A673 (cell line): ENCODE measurements at regions of chr10 and their contacts with region 1.

Region 1: GRCh38 chr10:118568327-118568848 is 27.1 kb downstream of the PRLHR start:
- DNase-seq: peak; percentile 76
- H3K4me3 ChIP-seq: no peak overlapping the region
- H3K27ac ChIP-seq: no peak overlapping the region
- H3K4me1 ChIP-seq: no peaks in the 10 kb centered on the region
- H3K27me3 ChIP-seq: no peaks in the 10 kb centered on the region
- CTCF ChIP-seq: peak; percentile 68

Region 2: DNA sequence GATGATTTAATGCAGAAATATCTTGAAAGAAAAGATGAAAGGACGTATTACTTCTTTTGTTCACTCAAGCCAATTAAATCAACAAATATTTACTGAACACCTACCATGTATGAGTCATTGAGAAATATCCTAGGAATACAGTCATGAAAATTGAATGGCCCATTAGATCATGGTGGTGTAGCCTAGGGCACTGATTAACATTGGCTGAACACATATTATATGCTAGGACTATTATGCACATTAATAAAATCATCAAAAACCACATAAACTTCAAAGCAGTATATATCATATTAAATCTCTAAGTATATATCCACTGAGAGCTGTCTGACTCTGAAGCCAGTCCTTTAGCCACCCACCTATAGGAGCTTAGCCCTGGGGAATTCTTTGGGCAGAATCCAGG is 268.1 kb before region 1 on chr10:
- CTCF ChIA-PET with region 1: no interaction called
- POLR2A ChIA-PET with region 1: no interaction called
- intact Hi-C with region 1: no loop called
- DNase-seq: no peak
- H3K4me3 ChIP-seq: no peak overlapping the region
- H3K27ac ChIP-seq: no peak overlapping the region
- H3K4me1 ChIP-seq: no peaks in the 10 kb centered on the region
- H3K27me3 ChIP-seq: no peaks in the 10 kb centered on the region
- CTCF ChIP-seq: no peak

Region 3: GRCh38 chr10:118720685-118721538 is 152.5 kb after region 1 on chr10:
- CTCF ChIA-PET with region 1: interaction called, 14 read pairs
- POLR2A ChIA-PET with region 1: no interaction called
- intact Hi-C with region 1: loop called (anchors 1 kb)
- DNase-seq: peak; percentile 64
- H3K4me3 ChIP-seq: no peak overlapping the region
- H3K27ac ChIP-seq: no peak overlapping the region
- H3K4me1 ChIP-seq: no peaks in the 10 kb centered on the region
- H3K27me3 ChIP-seq: no peaks in the 10 kb centered on the region
- CTCF ChIP-seq: peak; percentile 90

Region 4: GRCh38 chr10:118850418-118851061 is 282.2 kb after region 1 on chr10:
- CTCF ChIA-PET with region 1: interaction called, 3 read pairs
- POLR2A ChIA-PET with region 1: no interaction called
- intact Hi-C with region 1: loop called (anchors 1 kb)
- DNase-seq: peak; percentile 73
- H3K4me3 ChIP-seq: no peak overlapping the region
- H3K27ac ChIP-seq: no peak overlapping the region
- H3K4me1 ChIP-seq: no peaks in the 10 kb centered on the region
- H3K27me3 ChIP-seq: peaks cover 6% of the 10 kb centered on the region
- CTCF ChIP-seq: peak; percentile 87

Region 5: GRCh38 chr10:118986815-118987790 is 418.7 kb after region 1 on chr10:
- CTCF ChIA-PET with region 1: interaction called, 10 read pairs
- POLR2A ChIA-PET with region 1: no interaction called
- intact Hi-C with region 1: no loop called
- DNase-seq: no peak
- H3K4me3 ChIP-seq: no peak overlapping the region
- H3K27ac ChIP-seq: no peak overlapping the region
- H3K4me1 ChIP-seq: no peaks in the 10 kb centered on the region
- H3K27me3 ChIP-seq: no peaks in the 10 kb centered on the region
- CTCF ChIP-seq: no peak

Region 6: DNA sequence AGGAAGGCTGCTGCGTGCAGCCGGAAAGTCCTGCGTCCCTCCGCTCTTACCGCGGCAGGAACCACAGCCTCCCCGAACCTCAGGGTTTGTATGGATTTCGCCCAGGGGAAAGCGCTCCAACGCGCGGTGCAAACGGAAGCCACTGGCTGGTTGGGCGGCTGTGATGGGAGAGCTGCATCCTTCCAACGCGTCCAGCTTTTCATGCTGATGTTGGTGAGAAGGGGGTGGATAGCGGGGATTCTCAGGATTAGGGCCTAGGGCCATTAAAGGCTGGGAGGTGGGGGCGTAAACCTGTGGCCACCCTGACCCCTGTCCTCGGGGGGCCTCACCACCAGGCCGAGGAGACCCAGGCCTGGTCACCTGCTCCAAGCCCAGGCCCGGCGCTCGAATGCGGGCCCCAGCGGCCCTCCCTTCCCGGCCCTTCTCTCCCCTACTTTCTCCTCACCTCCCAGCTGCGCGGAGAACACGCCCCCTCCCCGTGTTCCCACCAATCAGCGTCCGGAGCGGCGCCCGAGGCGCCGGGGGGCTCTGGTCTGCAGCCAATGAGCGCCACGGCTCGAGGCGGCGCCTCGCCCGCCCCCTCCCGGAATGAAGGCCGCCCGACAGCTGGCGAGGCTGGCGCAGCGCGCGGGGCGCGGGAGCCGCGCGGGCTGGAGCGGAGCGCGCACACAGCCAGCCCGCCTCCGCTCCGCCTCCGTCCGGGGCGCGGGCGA is 460.7 kb after region 1 on chr10:
- CTCF ChIA-PET with region 1: no interaction called
- POLR2A ChIA-PET with region 1: no interaction called
- intact Hi-C with region 1: loop called (anchors 10 kb)
- DNase-seq: peak; percentile 94
- H3K4me3 ChIP-seq: peak overlapping the region; percentile 50
- H3K27ac ChIP-seq: no peak overlapping the region
- H3K4me1 ChIP-seq: no peaks in the 10 kb centered on the region
- H3K27me3 ChIP-seq: no peaks in the 10 kb centered on the region
- CTCF ChIP-seq: no peak